ENCODE measurements at regions of chr14 and their contacts with region 1.

Region 1: DNA sequence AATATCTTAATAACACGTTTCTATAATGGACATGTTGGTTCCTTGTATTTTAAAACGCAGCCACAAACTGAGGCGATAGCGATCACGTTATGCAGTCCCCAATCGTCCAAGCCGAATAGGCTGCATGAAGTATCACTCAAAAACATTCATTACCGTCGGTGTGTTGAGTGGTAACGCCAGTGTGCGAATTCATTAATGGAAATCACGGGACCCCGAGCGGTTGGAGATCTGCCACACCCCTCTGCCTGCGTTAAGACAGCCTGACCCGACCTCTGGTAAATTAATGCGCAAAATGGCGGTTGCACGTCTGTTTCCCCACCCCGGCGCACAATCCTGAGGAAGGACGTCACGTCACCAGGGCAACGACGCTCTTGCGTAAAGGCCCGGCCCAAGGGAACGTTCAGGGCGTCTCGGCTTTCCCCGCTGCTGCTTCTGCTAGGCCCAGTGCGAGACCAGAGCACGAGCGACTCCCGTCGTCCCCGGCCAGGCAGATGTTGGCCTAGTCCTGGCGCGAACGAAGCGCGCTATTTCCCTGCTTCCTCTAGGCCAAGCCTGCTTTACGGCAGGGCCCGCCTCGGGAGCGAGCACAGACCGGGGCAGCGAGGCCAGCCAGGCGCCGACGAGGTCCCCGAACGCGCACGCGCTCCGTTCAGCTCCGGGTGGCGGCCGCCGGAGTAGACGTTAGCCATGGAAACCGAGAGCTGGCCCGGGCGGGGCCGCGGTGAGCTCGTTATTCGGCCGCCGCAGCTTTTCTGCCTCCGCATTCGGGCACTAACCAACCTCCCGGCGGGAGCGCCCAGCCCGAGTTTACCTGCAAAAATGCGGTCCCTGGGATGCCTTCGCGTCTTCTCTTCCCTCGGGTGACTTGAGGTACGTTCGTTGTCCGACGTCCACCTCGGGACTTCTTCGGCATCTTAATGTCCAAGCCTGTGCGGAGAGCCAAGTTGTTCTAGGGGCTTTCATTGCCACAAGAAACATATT is at the start of gene PCNX4:
- DNase-seq: peak; percentile 90
- H3K4me3 Mint-ChIP-seq: peak within 1 kb of the TSS; percentile 98
- H3K27ac Mint-ChIP-seq: peak within 1 kb of the TSS; percentile 98
- H3K4me1 Mint-ChIP-seq: peaks cover 34% of the 10 kb centered on the region
- H3K27me3 Mint-ChIP-seq: peaks cover 2% of the 10 kb centered on the region
- total RNA-seq, gene PCNX4: 41.6 and 46.7 TPM in 2 replicates

Region 2: DNA sequence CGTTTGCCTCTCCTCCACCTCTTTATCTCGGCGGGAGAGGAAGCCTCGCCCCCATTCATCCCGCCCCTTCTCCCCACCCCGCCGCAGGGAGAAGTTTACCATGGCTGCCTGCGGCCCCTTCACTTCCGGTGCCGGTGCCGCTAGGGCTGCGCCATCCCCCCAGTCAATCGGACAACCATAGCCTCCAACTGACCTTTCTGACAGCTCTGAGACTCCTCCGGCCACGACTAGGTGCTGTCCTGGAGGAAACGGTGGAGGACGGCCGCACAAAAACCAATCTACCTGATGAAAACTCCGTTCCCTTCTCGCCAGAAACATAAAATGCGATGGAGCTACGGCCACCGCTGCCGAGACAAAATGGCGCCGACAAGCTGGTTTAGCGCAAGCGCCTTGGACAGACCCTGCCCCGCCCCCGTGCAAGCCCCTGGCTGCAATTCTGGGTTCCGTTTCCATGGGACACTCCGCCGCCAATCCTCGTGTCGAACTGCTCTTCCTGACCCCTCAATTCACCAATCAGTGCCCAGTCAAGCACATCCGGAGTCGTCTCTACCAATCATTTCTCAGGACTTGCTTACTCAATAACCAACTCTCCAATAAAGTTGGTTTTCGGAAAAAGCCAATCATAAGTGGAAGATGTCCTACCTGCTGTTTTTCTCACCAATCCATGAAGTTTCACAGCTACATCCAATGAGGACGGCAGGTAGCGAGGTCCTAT is 1793.9 kb before region 1 on chr14:
- intact Hi-C with region 1: loop called (anchors 5 kb)
- DNase-seq: peak; percentile 97
- H3K4me3 Mint-ChIP-seq: no peak overlapping the region
- H3K27ac Mint-ChIP-seq: no peak overlapping the region
- H3K4me1 Mint-ChIP-seq: peaks cover 53% of the 10 kb centered on the region
- H3K27me3 Mint-ChIP-seq: no peaks in the 10 kb centered on the region

Region 3: DNA sequence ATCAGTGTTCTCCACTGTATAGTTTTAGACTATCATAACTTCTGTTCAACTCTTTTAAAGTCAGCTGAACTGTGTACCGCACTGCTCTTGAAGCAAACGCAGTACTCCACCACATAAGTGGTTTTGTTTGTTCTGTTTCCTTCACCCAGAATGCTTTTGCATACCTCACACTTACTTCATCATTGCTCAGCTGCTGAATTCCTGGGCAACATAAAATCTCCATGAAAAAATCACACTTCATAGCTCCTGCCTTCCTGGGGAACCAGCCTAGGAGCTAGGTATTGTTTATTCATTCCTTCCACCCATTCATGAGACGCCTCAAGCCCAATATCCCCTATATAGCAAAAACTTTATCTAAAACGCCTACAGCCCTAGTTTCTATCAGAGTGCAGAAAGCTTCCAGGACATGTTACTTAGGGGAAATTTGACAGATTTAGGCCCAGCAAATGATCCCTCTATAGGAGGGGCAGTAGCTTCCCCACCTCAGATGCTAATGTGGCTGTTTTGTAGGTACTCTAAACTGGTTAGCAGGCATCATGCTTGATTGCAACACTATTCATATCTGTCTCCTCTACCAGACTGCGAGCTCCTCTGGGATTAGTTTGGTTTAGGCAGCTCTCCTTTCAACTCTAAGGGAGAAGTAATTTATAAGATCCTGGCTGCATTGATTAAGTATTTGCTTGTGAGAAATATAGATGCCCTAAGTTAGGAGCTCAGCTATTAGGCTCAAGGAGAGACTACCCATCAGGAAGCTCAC is 127.4 kb before region 1 on chr14:
- intact Hi-C with region 1: loop called (anchors 2 kb)
- DNase-seq: no peak
- H3K4me3 Mint-ChIP-seq: peak overlapping the region; percentile 80
- H3K27ac Mint-ChIP-seq: no peak overlapping the region
- H3K4me1 Mint-ChIP-seq: no peaks in the 10 kb centered on the region
- H3K27me3 Mint-ChIP-seq: peaks cover 7% of the 10 kb centered on the region

Region 4: GRCh38 chr14:60184146-60184904 is 92.5 kb after region 1 on chr14:
- intact Hi-C with region 1: loop called (anchors 1 kb)
- DNase-seq: no peak
- H3K4me3 Mint-ChIP-seq: peak overlapping the region; percentile 65
- H3K27ac Mint-ChIP-seq: peak overlapping the region; percentile 67
- H3K4me1 Mint-ChIP-seq: peaks cover 13% of the 10 kb centered on the region
- H3K27me3 Mint-ChIP-seq: no peaks in the 10 kb centered on the region

Region 5: DNA sequence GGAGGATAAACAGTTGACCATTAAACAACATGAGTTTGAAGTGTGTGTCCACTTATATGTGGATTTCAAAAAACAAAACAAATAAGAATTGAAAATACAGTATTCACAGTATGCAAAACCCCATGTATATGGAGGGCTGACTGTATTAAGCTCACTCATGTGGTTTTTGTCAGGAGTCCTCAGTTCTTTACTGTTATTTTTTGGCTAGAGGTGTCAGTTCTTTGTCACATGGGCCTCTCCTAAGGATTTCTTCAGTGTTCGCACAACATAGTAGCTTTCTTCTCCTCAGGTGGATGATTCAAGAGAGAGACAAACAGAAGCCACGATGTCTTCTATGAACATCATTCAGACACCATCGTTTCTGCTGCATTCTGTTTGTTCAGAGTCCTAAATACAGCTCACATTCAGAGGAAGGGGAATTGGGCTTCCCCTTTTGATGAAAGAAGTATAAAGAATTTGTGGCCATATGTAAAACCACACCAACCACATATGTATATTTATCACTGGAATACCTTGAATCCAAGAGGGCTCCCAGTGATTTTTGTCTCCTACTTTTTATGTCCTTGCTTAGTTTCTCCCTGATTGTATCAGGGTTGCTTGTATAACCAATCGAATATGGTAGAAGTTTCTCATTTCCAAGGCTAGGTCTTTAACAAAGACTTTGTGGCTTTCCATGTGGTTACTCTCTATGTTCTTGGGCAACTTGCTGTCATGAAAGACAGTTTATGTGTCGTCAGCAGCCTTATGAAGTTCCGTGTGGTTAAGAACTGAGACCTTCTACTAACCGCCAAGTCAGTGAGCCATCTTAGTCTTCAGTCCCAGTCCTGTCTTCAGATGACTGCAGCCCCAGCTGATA is 661.7 kb after region 1 on chr14:
- intact Hi-C with region 1: loop called (anchors 5 kb)
- DNase-seq: peak; percentile 66
- H3K4me3 Mint-ChIP-seq: peak overlapping the region; percentile 66
- H3K27ac Mint-ChIP-seq: peak overlapping the region; percentile 90
- H3K4me1 Mint-ChIP-seq: peaks cover 53% of the 10 kb centered on the region
- H3K27me3 Mint-ChIP-seq: peaks cover 5% of the 10 kb centered on the region

Region 6: GRCh38 chr14:61321385-61322010 is 1229.7 kb after region 1 on chr14 and contains the start of gene PRKCH:
- intact Hi-C with region 1: loop called (anchors 10 kb)
- DNase-seq: peak; percentile 82
- H3K4me3 Mint-ChIP-seq: peak within 1 kb of the TSS; percentile 93
- H3K27ac Mint-ChIP-seq: peak within 1 kb of the TSS; percentile 95
- H3K4me1 Mint-ChIP-seq: peaks cover 32% of the 10 kb centered on the region
- H3K27me3 Mint-ChIP-seq: no peaks in the 10 kb centered on the region
- total RNA-seq, gene PRKCH: 145 and 151 TPM in 2 replicates

Measured in activated T-helper 1 cell treated with anti-CD3 and anti-CD28 coated beads, Interleukin-12 subunit alpha, Interleukin-12 subunit beta, Interleukin-2, Interleukin-4 antibody, amounts not matched to agents 30 ng/mL and 10 ng/mL and 1 ng/mL, durations not matched to agents 14 hours and 24 hours and 36 hours (primary cell).